HEK293T (cell line): ENCODE measurements at regions of chr5 and their contacts with region 1.

Region 1: DNA sequence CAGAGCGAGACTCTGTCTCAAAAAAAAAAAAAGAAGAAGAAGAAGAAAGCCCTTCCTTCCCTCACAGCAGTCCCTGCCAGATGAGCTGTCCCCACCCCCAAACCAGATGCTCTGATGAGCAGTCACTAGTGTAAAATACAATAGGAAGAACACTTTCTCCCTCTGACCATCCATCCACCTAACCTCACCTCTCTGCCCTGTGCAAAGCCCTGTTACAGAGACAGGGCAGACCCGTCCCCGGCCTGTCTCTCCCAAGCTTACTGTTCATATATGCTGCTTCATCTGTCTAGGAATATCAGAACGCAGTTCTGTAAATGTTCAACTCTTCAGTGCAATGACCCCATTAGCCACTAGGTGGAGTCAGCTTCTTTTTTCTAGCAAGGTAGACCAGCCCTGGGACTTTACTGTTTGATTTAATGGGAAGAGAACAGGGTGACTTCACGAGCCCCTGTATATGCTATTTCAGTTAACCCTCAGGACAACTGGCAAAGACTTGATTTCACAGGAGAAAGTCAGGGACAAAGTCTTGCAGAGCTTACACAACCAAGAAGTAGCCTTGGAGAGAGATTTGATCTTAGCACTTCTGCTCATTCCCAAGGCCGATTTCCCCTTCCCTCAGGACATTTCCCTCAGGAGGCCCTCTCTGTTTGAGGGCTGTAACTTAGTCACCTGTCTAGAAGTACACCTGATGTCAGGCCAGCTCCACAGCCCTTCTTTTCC is 14.9 kb upstream of the FGFR4 start:
- DNase-seq: peak; percentile 79

Region 2: GRCh38 chr5:176995896-176996754 is 75.7 kb before region 1 on chr5:
- CTCF ChIA-PET with region 1: no interaction called
- POLR2A ChIA-PET with region 1: no interaction called
- DNase-seq: no peak

Region 3: DNA sequence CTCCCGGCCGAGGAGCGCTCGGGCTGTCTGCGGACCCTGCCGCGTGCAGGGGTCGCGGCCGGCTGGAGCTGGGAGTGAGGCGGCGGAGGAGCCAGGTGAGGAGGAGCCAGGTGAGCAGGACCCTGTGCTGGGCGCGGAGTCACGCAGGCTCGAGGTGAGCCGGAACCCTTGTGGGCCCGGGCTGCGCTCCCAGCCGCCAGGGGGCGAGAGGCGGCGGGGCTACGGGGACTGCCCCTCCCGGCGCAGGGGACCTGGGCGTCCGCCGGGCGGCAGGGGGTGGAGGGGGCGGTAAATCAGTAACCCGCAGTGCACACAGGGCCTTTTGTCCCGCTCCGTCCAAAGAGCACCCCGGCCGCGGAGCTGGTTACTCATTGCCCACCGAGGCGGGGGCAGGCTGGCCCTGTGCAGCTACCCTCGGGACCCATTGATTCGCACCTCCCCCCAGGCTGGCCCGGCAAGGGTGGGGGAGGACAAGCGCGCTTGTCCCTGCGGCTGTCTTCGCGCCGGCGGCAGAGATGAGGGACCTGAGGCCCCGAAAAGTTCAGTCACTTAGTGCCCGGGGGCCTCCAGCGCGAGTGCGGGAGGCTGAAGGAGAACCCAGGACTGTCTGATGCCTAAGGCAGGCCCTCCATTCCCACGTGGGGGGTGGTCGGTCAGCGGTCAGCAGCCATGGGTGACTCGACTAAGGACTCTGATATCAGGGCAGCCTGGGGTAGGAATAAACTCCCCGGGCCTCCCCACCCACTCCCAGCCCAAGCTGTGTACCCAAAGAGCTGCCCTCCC is 15.3 kb after region 1 on chr5:
- CTCF ChIA-PET with region 1: interaction called, 59 read pairs
- POLR2A ChIA-PET with region 1: interaction called, 4 read pairs
- DNase-seq: peak; percentile 92

Region 4: DNA sequence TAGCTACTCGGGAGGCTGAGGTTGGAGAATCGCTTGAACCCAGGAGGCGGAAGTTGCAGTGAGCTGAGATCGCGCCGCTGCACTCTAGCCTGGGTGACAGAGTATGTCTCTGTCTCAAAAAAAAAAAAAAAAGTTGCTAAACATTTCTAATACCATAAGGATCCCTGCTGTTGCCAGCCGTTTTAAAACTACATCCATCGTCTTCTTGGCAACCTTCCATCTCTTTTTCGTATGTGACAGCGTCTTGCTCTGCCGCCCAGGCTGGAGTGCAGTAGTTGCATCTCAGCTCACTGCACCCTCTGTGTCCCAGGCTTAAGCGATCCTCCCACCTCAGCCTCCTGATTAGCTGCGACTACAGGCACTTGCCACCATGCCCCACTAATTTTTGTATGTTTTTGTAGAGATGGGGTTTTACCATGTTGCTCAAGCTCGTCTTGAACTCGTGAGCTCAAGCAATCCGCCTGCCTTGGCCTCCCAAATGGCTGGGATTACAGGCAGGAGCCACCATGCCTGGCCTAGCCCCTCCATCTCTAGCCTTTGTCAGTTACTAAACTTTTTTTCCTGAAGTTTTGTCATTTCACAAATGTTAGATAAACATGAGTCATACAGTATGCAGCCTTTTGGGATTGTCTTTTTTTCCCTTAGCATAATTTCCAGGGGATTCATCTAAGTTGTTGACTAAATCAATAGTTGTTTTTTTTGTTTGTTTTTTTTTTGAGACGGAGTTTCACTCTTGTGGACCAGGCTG is 75.2 kb after region 1 on chr5:
- CTCF ChIA-PET with region 1: no interaction called
- POLR2A ChIA-PET with region 1: no interaction called
- DNase-seq: no peak

Region 5: GRCh38 chr5:177249761-177250526 is 178.1 kb after region 1 on chr5:
- CTCF ChIA-PET with region 1: no interaction called
- POLR2A ChIA-PET with region 1: no interaction called
- DNase-seq: no peak